ENCODE measurements at regions of chr1 and their contacts with region 1.

Region 1: DNA sequence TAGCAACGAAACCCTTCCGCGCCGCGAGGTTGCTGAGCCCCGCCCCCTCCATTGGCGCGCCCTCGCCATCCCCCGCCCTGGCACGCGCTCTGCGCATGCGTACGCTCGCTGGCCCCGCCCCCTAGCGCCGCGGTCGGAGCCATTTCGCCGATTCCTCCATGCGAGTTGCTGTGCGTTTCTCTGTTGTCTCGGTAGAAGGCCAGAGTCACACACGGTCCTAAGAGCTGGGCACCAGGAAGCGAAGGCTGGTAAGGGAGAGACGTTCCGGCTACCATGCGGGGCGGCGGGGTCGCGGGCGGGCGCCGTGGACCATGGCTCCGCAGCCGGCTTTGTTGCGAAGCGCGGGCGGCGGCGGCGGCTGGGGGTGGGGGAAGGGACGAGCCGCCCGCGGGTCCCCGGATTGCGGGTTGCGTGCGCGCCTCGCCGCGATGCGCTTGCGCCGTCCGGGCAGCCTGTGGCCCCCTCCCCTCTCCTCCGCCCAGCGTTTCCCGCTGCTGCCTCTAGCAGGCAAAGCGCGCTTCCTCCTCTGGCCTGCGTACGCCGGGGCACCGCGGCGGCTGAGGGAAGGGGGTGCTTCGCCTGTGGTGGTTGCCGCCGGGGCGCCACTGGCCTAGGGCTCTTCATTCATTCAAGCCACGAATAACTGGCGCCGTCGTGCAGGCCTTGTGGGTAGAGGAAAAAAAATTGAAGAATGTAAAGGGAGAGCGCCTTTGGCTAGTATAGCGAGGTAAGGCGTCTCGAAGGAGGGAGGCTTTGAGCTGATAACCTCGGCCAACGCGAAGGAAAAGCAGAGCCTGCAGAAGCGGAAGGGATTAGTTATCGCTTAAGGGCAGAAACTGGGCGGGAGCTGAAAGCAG is at the start of gene DHX9:
- DNase-seq: peak; percentile 93
- H3K4me3 Mint-ChIP-seq: peak within 1 kb of the TSS; percentile 96
- H3K27ac Mint-ChIP-seq: peak within 1 kb of the TSS; percentile 98
- H3K4me1 Mint-ChIP-seq: peaks cover 41% of the 10 kb centered on the region
- H3K27me3 Mint-ChIP-seq: peaks cover under 1% of the 10 kb centered on the region
- total RNA-seq, gene DHX9: 302 and 322 TPM in 2 replicates

Region 2: GRCh38 chr1:182614796-182615454 is 224.5 kb before region 1 on chr1:
- intact Hi-C with region 1: loop called (anchors 5 kb)
- DNase-seq: peak; percentile 31
- H3K4me3 Mint-ChIP-seq: peak overlapping the region; percentile 72
- H3K27ac Mint-ChIP-seq: peak overlapping the region; percentile 86
- H3K4me1 Mint-ChIP-seq: peaks cover 64% of the 10 kb centered on the region
- H3K27me3 Mint-ChIP-seq: peaks cover 32% of the 10 kb centered on the region

Region 3: GRCh38 chr1:182789138-182790076 is 50.0 kb before region 1 on chr1 and contains the start of gene NPL:
- intact Hi-C with region 1: loop called (anchors 1 kb)
- DNase-seq: peak; percentile 82
- H3K4me3 Mint-ChIP-seq: peak within 1 kb of the TSS; percentile 86
- H3K27ac Mint-ChIP-seq: no peak within 1 kb of the TSS
- H3K4me1 Mint-ChIP-seq: peaks cover 6% of the 10 kb centered on the region
- H3K27me3 Mint-ChIP-seq: peaks cover 23% of the 10 kb centered on the region
- total RNA-seq, gene NPL: 3.0 and 4.6 TPM in 2 replicates

Region 4: DNA sequence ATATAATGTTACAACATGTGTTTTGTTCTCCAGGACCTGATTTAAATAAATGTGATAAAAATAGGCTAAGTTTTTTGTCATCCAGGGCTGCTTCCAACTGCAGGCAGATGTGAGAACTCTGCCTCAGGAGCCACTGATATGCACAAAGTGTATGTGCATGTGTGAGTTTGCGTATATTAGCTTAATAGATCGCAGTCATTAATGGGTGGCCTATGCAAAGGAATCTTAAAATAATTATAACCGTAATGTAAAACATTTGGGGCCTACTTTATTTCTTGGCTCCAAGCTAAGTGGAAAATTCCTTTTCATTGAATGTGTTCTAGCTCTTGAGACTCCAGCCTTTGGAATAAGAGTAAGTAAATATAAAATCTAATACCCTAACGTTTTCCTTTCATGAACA is 16.5 kb after region 1 on chr1:
- intact Hi-C with region 1: loop called (anchors 2 kb)
- DNase-seq: no peak
- H3K4me3 Mint-ChIP-seq: no peak overlapping the region
- H3K27ac Mint-ChIP-seq: no peak overlapping the region
- H3K4me1 Mint-ChIP-seq: peaks cover 6% of the 10 kb centered on the region
- H3K27me3 Mint-ChIP-seq: no peaks in the 10 kb centered on the region

Region 5: GRCh38 chr1:182877842-182878241 is 38.4 kb after region 1 on chr1:
- intact Hi-C with region 1: loop called (anchors 5 kb)
- DNase-seq: no peak
- H3K4me3 Mint-ChIP-seq: no peak overlapping the region
- H3K27ac Mint-ChIP-seq: peak overlapping the region; percentile 65
- H3K4me1 Mint-ChIP-seq: peaks cover 15% of the 10 kb centered on the region
- H3K27me3 Mint-ChIP-seq: no peaks in the 10 kb centered on the region

Region 6: GRCh38 chr1:183048087-183049085 is 208.9 kb after region 1 on chr1:
- intact Hi-C with region 1: no loop called
- DNase-seq: no peak
- H3K4me3 Mint-ChIP-seq: no peak overlapping the region
- H3K27ac Mint-ChIP-seq: no peak overlapping the region
- H3K4me1 Mint-ChIP-seq: peaks cover 2% of the 10 kb centered on the region
- H3K27me3 Mint-ChIP-seq: peaks cover 32% of the 10 kb centered on the region

Region 7: DNA sequence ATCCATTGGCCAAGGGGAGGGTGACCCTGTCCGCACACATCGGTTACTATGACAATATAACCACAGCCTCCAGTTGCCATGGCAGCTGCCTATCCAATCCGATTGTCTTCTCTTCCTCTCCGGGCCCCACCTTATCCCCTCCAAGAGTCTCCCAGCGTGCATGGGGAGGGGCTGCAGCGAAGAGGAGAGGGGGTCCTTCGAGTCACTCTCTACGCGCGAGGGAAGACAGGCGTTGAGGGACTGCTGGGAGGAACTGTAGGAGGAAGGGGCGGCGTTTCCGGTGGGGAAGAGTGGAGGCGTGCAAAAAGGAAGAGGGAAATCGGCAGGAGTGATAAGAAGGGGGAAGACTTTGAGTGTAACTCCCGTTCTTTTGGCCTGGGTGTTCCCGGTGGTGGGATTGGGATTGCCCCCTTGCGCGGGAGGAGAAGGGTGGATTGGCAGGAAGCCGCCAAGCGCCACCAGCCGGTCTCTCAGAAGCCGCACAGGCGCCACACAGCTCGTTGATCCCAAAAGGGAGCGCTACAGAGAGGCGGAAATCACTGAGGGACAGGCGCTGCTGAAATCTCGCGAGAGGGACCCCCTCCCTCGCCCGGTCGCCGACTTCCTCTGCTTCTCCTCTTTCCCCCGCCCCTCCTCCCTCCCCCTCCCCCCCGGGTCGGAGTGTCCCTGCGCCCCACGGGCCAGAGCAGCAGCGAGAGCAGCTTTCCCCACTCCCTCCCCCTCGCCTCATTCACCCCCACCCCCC is 632.5 kb after region 1 on chr1:
- intact Hi-C with region 1: loop called (anchors 10 kb)
- DNase-seq: peak; percentile 92
- H3K4me3 Mint-ChIP-seq: peak overlapping the region; percentile 87
- H3K27ac Mint-ChIP-seq: peak overlapping the region; percentile 99
- H3K4me1 Mint-ChIP-seq: peaks cover 24% of the 10 kb centered on the region
- H3K27me3 Mint-ChIP-seq: no peaks in the 10 kb centered on the region

Measured in activated T-helper 2 cell treated with anti-CD3 and anti-CD28 coated beads, Interferon-gamma antibody, Interleukin-2, Interleukin-4, amounts not matched to agents 10 μg/mL and 5 μg/mL and 100 μg/mL, durations not matched to agents 14 hours and 24 hours and 36 hours (primary cell).